Activated CD4-positive, alpha-beta T cell treated with anti-CD3 and anti-CD28 coated beads, Interleukin-2, amount 10 ng/mL, durations not matched to agents 24 days and 14 days (primary cell): ENCODE measurements at regions of chr10 and their contacts with region 1.

Region 1: DNA sequence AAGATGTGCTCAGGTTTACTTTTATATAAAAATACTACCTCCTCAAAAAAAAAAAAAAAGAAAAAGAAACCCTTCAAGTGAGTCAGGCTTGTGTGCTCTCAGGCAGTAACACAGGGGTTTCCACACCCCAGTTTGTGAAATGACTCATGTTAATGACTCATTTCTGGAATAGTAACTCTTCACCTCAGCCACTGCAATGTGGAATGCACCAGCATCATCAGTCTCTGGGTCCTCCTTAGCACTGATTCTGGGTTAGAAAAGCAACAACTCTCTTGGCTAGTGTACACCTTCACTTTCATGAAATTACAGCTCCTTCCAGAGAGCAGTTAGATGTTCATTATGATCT is 110.6 kb downstream of the EMX2 start:
- DNase-seq: peak; percentile 86
- H3K4me3 Mint-ChIP-seq: peak overlapping the region; percentile 33
- H3K27ac Mint-ChIP-seq: peak overlapping the region; percentile 76
- H3K4me1 Mint-ChIP-seq: peaks cover 27% of the 10 kb centered on the region
- H3K27me3 Mint-ChIP-seq: peaks cover 4% of the 10 kb centered on the region

Region 2: GRCh38 chr10:117375360-117376178 is 277.6 kb before region 1 on chr10 and contains the start of gene PDZD8:
- intact Hi-C with region 1: loop called (anchors 5 kb)
- DNase-seq: peak; percentile 98
- H3K4me3 Mint-ChIP-seq: peak within 1 kb of the TSS; percentile 94
- H3K27ac Mint-ChIP-seq: peak within 1 kb of the TSS; percentile 87
- H3K4me1 Mint-ChIP-seq: peaks cover 15% of the 10 kb centered on the region
- H3K27me3 Mint-ChIP-seq: peaks cover 36% of the 10 kb centered on the region
- total RNA-seq, gene PDZD8: 23.3 and 23.5 TPM in 2 replicates

Region 3: GRCh38 chr10:117663750-117664149 is 10.6 kb after region 1 on chr10:
- intact Hi-C with region 1: loop called (anchors 1 kb)
- DNase-seq: peak; percentile 71
- H3K4me3 Mint-ChIP-seq: no peak overlapping the region
- H3K27ac Mint-ChIP-seq: peak overlapping the region; percentile 46
- H3K4me1 Mint-ChIP-seq: peaks cover 1% of the 10 kb centered on the region
- H3K27me3 Mint-ChIP-seq: peaks cover 15% of the 10 kb centered on the region

Region 4: GRCh38 chr10:117946525-117947070 is 293.5 kb after region 1 on chr10:
- intact Hi-C with region 1: no loop called
- DNase-seq: no peak
- H3K4me3 Mint-ChIP-seq: no peak overlapping the region
- H3K27ac Mint-ChIP-seq: no peak overlapping the region
- H3K4me1 Mint-ChIP-seq: no peaks in the 10 kb centered on the region
- H3K27me3 Mint-ChIP-seq: peaks cover 2% of the 10 kb centered on the region

Region 5: GRCh38 chr10:118046395-118047156 is 393.4 kb after region 1 on chr10 and contains the start of gene RAB11FIP2:
- intact Hi-C with region 1: loop called (anchors 10 kb)
- DNase-seq: peak; percentile 99
- H3K4me3 Mint-ChIP-seq: peak within 1 kb of the TSS; percentile 91
- H3K27ac Mint-ChIP-seq: peak within 1 kb of the TSS; percentile 85
- H3K4me1 Mint-ChIP-seq: peaks cover 21% of the 10 kb centered on the region
- H3K27me3 Mint-ChIP-seq: peaks cover 15% of the 10 kb centered on the region
- total RNA-seq, gene RAB11FIP2: 12.3 and 14.5 TPM in 2 replicates

Region 6: GRCh38 chr10:118341791-118342637 is 688.9 kb after region 1 on chr10 and contains the start of gene FAM204A:
- intact Hi-C with region 1: loop called (anchors 5 kb)
- DNase-seq: peak; percentile 99
- H3K4me3 Mint-ChIP-seq: peak within 1 kb of the TSS; percentile 89
- H3K27ac Mint-ChIP-seq: peak within 1 kb of the TSS; percentile 92
- H3K4me1 Mint-ChIP-seq: peaks cover 28% of the 10 kb centered on the region
- H3K27me3 Mint-ChIP-seq: peaks cover 9% of the 10 kb centered on the region
- total RNA-seq, gene FAM204A: 57.2 and 60.0 TPM in 2 replicates